ENCODE measurements at regions of chr20 and their contacts with region 1.

Region 1: GRCh38 chr20:20824924-20825584 is 112.6 kb upstream of the RALGAPA2 start:
- DNase-seq: peak in 8 of 9 donors; percentile 19 to 52 (median 36)
- ATAC-seq: peak; percentile 68
- H3K4me3 ChIP-seq: no peak overlapping the region
- H3K4me3 Mint-ChIP-seq: peak overlapping the region in 1 of 10 donors; percentile 5
- H3K27ac ChIP-seq: no peak overlapping the region
- H3K27ac Mint-ChIP-seq: no peak overlapping the region
- H3K4me1 ChIP-seq: no peaks in the 10 kb centered on the region
- H3K4me1 Mint-ChIP-seq: peaks cover 0 to 7% (median 0%) of the 10 kb centered on the region in 7 donors
- H3K27me3 ChIP-seq: no peaks in the 10 kb centered on the region
- H3K27me3 Mint-ChIP-seq: peaks cover 2 to 30% (median 20%) of the 10 kb centered on the region in 5 donors

Region 2: DNA sequence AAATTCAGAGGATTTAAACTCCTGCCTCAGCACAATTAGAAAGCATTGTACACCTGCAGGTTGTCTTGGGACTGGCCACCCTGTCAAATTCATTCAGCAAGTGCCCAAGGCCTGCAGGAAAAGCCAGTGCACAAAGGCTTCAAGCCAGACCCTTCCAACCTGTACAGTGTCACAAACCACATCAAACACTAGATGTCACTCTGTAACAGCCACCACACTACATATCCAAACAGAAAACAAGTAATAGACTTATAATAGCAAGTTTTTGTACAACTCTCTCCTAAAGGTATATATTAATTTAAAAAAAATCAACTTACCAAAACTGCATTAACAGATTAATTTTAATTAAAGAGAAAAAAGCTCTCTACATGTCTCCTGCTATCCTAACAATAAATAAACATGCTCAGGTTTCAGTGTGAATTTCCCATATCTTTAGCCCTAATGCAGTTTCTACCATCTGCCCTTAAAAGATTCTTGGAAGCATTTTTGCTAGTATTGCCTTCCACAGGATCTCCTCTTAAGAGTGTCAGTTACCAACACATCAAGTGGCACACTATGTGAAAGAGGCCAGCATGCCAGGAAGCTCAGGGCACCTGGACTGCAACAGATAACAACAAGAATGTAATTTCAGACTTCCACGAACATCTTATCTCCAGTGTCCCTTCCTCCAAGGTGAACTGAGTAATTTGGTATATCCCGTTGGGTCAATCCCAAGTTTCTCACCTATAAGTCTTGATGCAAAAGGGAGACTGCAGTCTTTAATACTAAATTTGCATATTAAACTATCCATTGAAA is 160.1 kb before region 1 on chr20:
- CTCF ChIA-PET with region 1: interaction called, 4 read pairs
- POLR2A ChIA-PET with region 1: no interaction called
- intact Hi-C with region 1: loop called in 1 of 2 experiments (anchors 1 kb)
- DNase-seq: peak in 3 of 9 donors; percentile 10 to 18 (median 17)
- ATAC-seq: peak; percentile 61
- H3K4me3 ChIP-seq: no peak overlapping the region
- H3K4me3 Mint-ChIP-seq: no peak overlapping the region
- H3K27ac ChIP-seq: no peak overlapping the region
- H3K27ac Mint-ChIP-seq: no peak overlapping the region
- H3K4me1 ChIP-seq: no peaks in the 10 kb centered on the region
- H3K4me1 Mint-ChIP-seq: peaks cover 21 to 50% (median 43%) of the 10 kb centered on the region in 7 donors
- H3K27me3 ChIP-seq: no peaks in the 10 kb centered on the region
- H3K27me3 Mint-ChIP-seq: no peaks in the 10 kb centered on the region

Region 3: DNA sequence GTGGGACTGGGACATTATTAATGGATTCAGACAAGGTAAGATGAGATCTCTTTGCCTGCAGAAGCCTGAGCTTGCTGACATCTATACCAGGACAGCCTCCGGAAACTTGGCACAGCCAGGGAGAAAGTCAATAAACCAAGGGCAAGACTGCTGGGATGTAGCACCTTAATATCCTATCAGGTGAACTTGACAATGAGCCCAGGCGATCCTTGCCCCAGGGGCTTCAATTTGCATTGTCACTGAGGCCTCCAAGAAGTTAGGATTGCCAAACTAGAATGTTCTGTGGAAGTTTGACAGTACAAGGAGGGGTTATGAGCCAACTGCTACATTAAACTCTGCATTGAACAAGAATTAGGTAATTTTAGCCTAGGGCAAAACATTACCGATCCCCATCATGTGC is 52.5 kb before region 1 on chr20:
- CTCF ChIA-PET with region 1: no interaction called
- POLR2A ChIA-PET with region 1: no interaction called
- intact Hi-C with region 1: no loop called
- DNase-seq: no peak
- ATAC-seq: no peak
- H3K4me3 ChIP-seq: no peak overlapping the region
- H3K4me3 Mint-ChIP-seq: no peak overlapping the region
- H3K27ac ChIP-seq: no peak overlapping the region
- H3K27ac Mint-ChIP-seq: no peak overlapping the region
- H3K4me1 ChIP-seq: no peaks in the 10 kb centered on the region
- H3K4me1 Mint-ChIP-seq: peaks cover 0 to 8% (median 5%) of the 10 kb centered on the region in 7 donors
- H3K27me3 ChIP-seq: no peaks in the 10 kb centered on the region
- H3K27me3 Mint-ChIP-seq: peaks cover 6 to 31% (median 30%) of the 10 kb centered on the region in 5 donors